Dorsolateral prefrontal cortex (tissue), 120 donors: ENCODE measurements at regions of chr5 and their contacts with region 1.

Region 1: GRCh38 chr5:135466178-135467050 is 14.3 kb upstream of the TIFAB start:
- DNase-seq: peak in 9 of 10 donors; percentile 61 to 89 (median 77)
- H3K4me3 ChIP-seq: peak overlapping the region in 55 of 59 donors; percentile 11 to 61 (median 39)
- H3K27ac ChIP-seq: no peak overlapping the region
- H3K27me3 ChIP-seq: peaks cover 0 to 30% (median 2%) of the 10 kb centered on the region in 45 donors
- CTCF ChIP-seq: peak; percentile 37 to 97 (median 90)

Region 2: GRCh38 chr5:135551593-135552447 is 85.4 kb after region 1 on chr5:
- intact Hi-C with region 1: loop called (anchors 1 to 2 kb)
- DNase-seq: peak in 9 of 10 donors; percentile 49 to 79 (median 71)
- H3K4me3 ChIP-seq: no peak overlapping the region
- H3K27ac ChIP-seq: no peak overlapping the region
- H3K27me3 ChIP-seq: peaks cover 0 to 51% (median 12%) of the 10 kb centered on the region in 45 donors
- CTCF ChIP-seq: peak; percentile 81 to 99 (median 92)

Region 3: DNA sequence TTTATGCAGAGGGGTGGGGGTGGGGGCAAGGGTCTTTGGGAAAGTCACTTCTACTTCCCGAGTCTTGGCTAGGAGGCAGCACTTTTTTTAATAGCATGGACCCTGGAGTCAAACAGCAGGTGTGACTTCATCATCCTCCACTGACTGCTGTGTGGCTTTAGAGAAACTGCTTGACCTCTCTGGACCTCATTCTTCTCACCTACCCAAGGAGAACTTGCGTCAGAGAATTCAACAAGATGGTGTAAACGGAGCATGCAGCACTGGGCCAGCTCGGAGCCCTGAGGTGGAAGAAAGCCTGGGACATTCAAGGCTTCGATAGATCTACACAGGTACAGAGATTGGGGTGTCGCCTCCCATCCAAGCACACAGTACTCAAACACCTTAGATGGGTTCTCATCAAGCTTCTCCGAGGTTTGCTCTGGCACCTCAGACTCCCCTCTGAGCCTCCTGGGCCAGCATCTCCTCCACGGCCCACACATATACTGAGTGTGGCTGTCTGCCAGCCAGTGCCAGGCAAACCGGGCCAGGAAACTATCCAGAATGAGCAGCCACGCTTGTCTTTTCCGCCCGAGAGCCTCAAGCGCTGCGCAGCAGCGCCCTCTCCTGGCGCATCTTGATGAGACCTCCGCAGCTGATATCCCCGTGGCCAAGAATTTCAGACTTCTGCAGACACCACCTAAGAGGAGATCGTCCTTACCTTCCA is 363.4 kb after region 1 on chr5:
- intact Hi-C with region 1: loop called (anchors 5 kb)
- DNase-seq: peak in 9 of 10 donors; percentile 74 to 88 (median 83)
- H3K4me3 ChIP-seq: no peak overlapping the region
- H3K27ac ChIP-seq: no peak overlapping the region
- H3K27me3 ChIP-seq: peaks cover 0 to 24% (median 0%) of the 10 kb centered on the region in 45 donors
- CTCF ChIP-seq: peak; percentile 63 to 95 (median 84)

Region 4: DNA sequence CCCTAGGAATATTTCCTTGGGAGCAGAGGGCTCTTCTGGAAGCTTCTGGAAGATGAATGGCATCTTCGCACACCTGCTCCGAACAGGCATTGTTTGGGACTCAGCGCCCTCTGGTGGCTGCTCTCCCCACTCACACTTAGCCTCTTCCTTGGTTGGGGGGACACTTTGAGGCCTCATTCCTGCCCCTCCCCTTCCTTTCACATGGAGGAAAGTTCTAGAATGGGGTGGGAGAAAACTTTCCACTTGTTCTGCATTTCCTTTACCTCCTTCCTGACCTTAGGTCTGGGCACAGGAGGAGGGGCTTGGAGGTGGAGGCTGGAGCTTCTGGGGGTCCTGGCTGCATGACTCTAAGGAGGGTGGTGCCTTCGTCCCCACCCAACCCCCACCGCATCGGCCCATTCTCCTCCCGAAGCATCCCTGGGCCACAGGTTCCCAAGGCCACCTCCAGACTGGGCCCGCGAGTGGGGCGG is 745.9 kb after region 1 on chr5:
- intact Hi-C with region 1: loop called in 1 of 2 experiments (anchors 10 kb)
- DNase-seq: peak in 6 of 10 donors; percentile 31 to 56 (median 50)
- H3K4me3 ChIP-seq: no peak overlapping the region
- H3K27ac ChIP-seq: no peak overlapping the region
- H3K27me3 ChIP-seq: peaks cover 0 to 25% (median 2%) of the 10 kb centered on the region in 45 donors
- CTCF ChIP-seq: peak; percentile 64 to 97 (median 90)